ENCODE measurements at regions of chr2 and their contacts with region 1.

Region 1: DNA sequence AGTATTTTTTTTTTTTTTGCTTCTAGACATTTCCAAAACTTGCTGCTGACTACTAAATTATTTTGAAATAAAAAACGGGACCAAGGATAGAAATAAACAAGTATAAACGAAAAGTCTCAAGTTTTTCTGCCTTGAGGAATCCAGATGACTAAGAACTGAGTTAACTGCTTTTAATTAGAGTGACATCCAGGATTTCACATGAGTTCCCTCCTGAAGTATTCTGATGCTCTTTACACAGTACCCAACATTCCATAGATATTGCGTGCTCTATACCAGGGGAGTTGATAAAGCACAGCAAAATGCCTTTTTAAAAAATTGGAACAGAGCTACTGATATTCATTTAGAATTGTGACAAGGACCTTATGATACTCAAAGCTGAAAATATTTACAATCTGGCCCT is 618.0 kb downstream of the CCDC85A start:
- DNase-seq: no peak
- ATAC-seq: no peak

Region 2: GRCh38 chr2:56102866-56103265 is 698.9 kb before region 1 on chr2:
- intact Hi-C with region 1: no loop called
- DNase-seq: no peak
- ATAC-seq: no peak

Region 3: DNA sequence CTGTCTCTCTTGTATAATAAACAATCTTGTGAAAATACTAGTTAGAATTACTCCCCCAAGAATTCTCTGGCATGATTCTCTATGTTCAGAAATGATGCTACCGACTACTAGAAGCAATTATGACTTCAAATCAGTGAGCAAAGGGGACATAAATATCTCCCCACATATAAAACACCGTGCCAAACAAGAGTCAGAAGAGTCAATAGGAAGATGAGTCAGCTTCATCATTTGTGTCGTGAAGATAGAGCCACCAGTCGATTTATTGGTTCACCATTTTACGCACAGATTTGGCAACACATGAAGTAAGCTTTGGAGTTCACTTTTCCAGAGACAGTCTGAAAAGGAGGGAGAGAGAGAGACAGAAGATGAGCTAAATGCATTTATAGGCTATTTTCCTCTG is 32.9 kb after region 1 on chr2:
- intact Hi-C with region 1: loop called (anchors 2 kb)
- DNase-seq: no peak
- ATAC-seq: no peak

Region 4: DNA sequence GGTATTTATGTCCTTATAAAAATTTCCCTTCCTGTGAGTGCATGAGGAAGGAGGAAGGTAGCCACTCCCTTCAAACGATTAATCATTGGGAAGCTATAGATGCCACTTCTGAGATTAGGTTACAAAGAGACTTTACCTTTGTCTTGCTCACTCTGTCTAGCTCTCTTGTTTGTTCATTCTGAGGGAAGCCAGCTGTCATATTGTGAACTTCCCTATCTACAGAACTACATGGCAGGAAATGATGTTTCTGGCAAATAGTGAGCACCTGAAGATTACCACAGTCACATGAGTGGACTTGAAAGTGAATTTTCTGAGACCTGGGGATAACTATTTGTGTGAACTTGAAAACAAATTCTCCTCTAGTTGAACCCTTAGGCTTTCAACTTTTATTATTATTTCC is 158.8 kb after region 1 on chr2:
- intact Hi-C with region 1: no loop called
- DNase-seq: no peak
- ATAC-seq: no peak